Endothelial cell of umbilical vein (primary cell): ENCODE measurements at regions of chr4 and their contacts with region 1.

Region 1: GRCh38 chr4:4420421-4420820 is 33.5 kb downstream of the NSG1 start:
- DNase-seq: no peak
- H3K4me3 ChIP-seq: no peak overlapping the region
- H3K27ac ChIP-seq: no peak overlapping the region
- H3K4me1 ChIP-seq: no peaks in the 10 kb centered on the region
- H3K27me3 ChIP-seq: no peaks in the 10 kb centered on the region
- CTCF ChIP-seq: no peak
- POLR2A ChIP-seq: no peak

Region 2: GRCh38 chr4:4430492-4431197 is 10.2 kb after region 1 on chr4:
- CTCF ChIA-PET with region 1: interaction called, 11 read pairs
- POLR2A ChIA-PET with region 1: no interaction called
- dilution Hi-C with region 1: no loop called
- intact Hi-C with region 1: no loop called
- DNase-seq: peak; percentile 50
- H3K4me3 ChIP-seq: no peak overlapping the region
- H3K27ac ChIP-seq: no peak overlapping the region
- H3K4me1 ChIP-seq: peaks cover 4% of the 10 kb centered on the region
- H3K27me3 ChIP-seq: no peaks in the 10 kb centered on the region
- CTCF ChIP-seq: peak; percentile 73 to 74
- POLR2A ChIP-seq: no peak